Transverse colon (tissue), 4 donors: ENCODE measurements at regions of chr13 and their contacts with region 1.

Region 1: DNA sequence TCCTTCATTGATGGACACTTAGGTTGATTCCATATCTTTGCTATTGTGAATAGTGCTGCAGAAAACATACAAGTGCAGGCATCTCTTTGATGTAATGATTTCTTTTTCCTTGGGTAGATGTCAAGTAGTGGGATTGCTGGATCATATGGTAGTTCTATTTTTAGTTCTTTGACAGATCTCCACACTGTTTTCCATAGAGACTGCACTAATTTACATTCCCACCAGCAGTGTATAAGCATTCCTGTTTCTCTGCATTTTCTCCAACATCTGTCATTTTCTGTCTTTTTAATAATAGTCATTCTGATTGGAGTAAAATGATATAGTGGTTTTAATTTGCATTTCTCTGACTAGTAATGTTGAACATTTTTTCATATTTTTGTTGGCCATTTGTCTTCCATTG is 116.7 kb downstream of the LMO7 start:
- DNase-seq: no peak
- H3K4me3 ChIP-seq: no peak overlapping the region
- H3K27ac ChIP-seq: no peak overlapping the region
- H3K4me1 ChIP-seq: no peaks in the 10 kb centered on the region
- H3K27me3 ChIP-seq: no peaks in the 10 kb centered on the region
- CTCF ChIP-seq: no peak
- EP300 ChIP-seq: no peak
- POLR2A ChIP-seq: no peak

Region 2: GRCh38 chr13:74867460-74867859 is 885.4 kb before region 1 on chr13:
- in situ Hi-C with region 1: no loop called
- intact Hi-C with region 1: loop called (anchors 10 kb)
- DNase-seq: no peak
- H3K4me3 ChIP-seq: no peak overlapping the region
- H3K27ac ChIP-seq: no peak overlapping the region
- H3K4me1 ChIP-seq: no peaks in the 10 kb centered on the region
- H3K27me3 ChIP-seq: no peaks in the 10 kb centered on the region
- CTCF ChIP-seq: no peak
- EP300 ChIP-seq: no peak
- POLR2A ChIP-seq: no peak

Region 3: DNA sequence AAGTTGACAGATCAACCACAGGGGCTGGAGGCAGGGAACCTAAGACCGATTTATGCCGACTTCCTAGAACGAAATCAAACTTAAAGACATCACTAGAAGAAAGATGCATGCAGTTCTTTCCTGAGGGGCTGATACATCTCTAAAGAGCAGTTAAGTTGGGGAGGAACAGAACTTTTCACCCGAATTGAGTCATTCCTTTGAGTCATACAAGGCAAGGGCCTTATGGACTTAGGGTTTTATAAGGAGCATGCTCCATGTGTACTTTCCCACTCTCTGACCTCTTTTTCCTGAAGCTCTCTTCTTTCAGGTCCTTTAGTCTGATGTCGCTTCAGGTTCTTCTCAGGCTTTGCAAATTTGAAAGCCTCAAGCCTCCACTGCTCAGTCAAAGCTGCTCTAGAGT is 1282.1 kb after region 1 on chr13:
- in situ Hi-C with region 1: no loop called
- intact Hi-C with region 1: no loop called
- DNase-seq: no peak
- H3K4me3 ChIP-seq: no peak overlapping the region
- H3K27ac ChIP-seq: no peak overlapping the region
- H3K4me1 ChIP-seq: no peaks in the 10 kb centered on the region
- H3K27me3 ChIP-seq: no peaks in the 10 kb centered on the region
- CTCF ChIP-seq: no peak
- EP300 ChIP-seq: no peak
- POLR2A ChIP-seq: no peak